ENCODE measurements at regions of chr3 and their contacts with region 1.

Region 1: GRCh38 chr3:132180337-132180791 is 136.8 kb upstream of the ACP3 start:
- DNase-seq: peak; percentile 78
- H3K4me3 ChIP-seq: no peak overlapping the region
- H3K27ac ChIP-seq: no peak overlapping the region
- H3K4me1 ChIP-seq: no peaks in the 10 kb centered on the region
- H3K27me3 ChIP-seq: no peaks in the 10 kb centered on the region

Region 2: GRCh38 chr3:131812421-131812820 is 367.9 kb before region 1 on chr3:
- in situ Hi-C with region 1: loop called (anchors 10 kb)
- DNase-seq: peak; percentile 61
- H3K4me3 ChIP-seq: no peak overlapping the region
- H3K27ac ChIP-seq: no peak overlapping the region
- H3K4me1 ChIP-seq: no peaks in the 10 kb centered on the region
- H3K27me3 ChIP-seq: no peaks in the 10 kb centered on the region

Region 3: GRCh38 chr3:132034486-132035464 is 145.6 kb before region 1 on chr3 and contains the start of gene CPNE4:
- in situ Hi-C with region 1: loop called (anchors 10 kb)
- DNase-seq: peak; percentile 90
- H3K4me3 ChIP-seq: peak within 1 kb of the TSS; percentile 75
- H3K27ac ChIP-seq: no peak within 1 kb of the TSS
- H3K4me1 ChIP-seq: peaks cover 8% of the 10 kb centered on the region; the same call in 1 of the 2 replicates
- H3K27me3 ChIP-seq: peaks cover 30% of the 10 kb centered on the region
- total RNA-seq, gene CPNE4: 0.11 and 0.25 TPM in 2 replicates

Measured in GM23248 (cell line).